ENCODE measurements at regions of chr6 and their contacts with region 1.

Region 1: DNA sequence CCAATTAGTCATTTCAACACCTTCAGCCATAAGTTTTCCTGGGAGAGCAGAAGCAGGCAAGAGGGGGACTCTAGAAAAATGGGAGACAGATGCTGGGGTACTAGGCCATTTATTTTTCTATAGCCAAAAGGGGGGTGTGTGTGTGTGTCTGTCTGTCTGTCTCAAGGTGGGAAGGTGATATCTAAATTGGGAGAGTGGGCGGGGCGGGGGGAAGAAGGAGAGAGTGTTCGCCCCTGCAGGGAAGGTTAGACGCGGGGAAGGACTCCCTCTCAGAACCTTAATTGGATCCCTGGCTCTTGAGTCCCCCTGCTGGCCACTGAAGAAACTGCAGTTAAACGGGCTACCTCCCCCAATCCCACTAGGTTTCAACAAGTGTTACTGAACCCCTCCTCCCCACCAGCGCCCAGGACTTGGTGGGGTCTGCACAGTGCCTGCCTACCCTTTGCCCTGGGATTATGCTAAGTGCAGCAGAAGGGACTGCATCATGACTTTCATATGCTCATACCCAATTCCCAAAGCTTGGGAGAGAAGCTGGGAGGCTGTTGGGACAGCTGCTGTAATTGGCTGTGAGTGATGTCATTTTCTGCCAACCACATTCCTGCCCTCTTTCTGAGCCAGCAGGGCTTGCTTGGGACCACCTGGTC is 45.8 kb downstream of the FOXP4 start:
- DNase-seq: peak; percentile 75
- ATAC-seq: peak; percentile 83

Region 2: DNA sequence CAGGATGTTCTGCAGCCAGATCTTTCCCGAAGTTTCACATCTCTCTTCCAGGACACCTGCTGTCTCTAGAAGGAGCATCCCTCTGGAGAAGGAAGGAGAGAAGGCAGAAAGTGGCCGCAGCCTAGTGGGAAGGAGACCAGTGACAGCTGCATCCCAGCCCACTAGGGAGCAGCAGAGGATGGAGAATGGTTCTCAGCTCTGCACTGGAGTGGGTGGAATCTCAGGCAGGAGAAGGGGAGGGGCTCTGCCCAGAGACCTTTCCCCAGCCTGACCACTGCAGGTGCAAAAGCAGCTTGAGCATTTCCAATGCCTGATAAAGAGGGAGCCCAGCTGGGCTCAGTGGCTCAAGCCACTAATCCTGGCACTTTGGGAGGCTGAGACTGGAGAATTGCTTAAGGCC is 224.3 kb before region 1 on chr6:
- intact Hi-C with region 1: loop called (anchors 5 kb)
- DNase-seq: no peak
- ATAC-seq: peak; percentile 77

Region 3: GRCh38 chr6:41463062-41463930 is 128.7 kb before region 1 on chr6:
- intact Hi-C with region 1: loop called (anchors 5 kb)
- DNase-seq: peak; percentile 83
- ATAC-seq: peak; percentile 97